ENCODE measurements at regions of chr2 and their contacts with region 1.

Region 1: GRCh38 chr2:63698825-63699548 is 110.2 kb downstream of the MDH1 start:
- DNase-seq: peak; percentile 17
- H3K4me3 ChIP-seq: no peak overlapping the region
- H3K27ac ChIP-seq: peak overlapping the region; percentile 65
- H3K4me1 ChIP-seq: peaks cover 16% of the 10 kb centered on the region
- H3K27me3 ChIP-seq: no peaks in the 10 kb centered on the region
- CTCF ChIP-seq: peak; percentile 72

Region 2: DNA sequence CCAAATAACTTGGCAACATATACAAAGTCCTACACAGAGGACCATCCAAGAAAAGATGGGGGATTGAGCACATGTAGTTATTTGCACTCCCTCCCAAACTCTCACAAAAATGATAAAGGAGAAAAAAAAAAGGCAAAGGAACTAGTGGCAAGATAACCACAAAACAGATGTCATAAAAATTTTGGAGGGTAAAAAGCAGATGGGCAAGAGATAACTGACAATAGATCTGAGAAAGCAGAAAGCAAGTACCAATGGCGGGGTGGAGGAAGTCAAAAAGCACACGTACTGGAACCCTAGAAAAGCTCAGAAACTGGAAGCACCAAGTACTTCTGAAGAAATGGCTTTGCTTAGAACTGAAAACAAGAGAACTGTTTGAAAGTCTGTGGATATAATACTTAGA is 192.7 kb before region 1 on chr2:
- intact Hi-C with region 1: no loop called
- DNase-seq: no peak
- H3K4me3 ChIP-seq: no peak overlapping the region
- H3K27ac ChIP-seq: no peak overlapping the region
- H3K4me1 ChIP-seq: no peaks in the 10 kb centered on the region
- H3K27me3 ChIP-seq: no peaks in the 10 kb centered on the region
- CTCF ChIP-seq: no peak

Region 3: DNA sequence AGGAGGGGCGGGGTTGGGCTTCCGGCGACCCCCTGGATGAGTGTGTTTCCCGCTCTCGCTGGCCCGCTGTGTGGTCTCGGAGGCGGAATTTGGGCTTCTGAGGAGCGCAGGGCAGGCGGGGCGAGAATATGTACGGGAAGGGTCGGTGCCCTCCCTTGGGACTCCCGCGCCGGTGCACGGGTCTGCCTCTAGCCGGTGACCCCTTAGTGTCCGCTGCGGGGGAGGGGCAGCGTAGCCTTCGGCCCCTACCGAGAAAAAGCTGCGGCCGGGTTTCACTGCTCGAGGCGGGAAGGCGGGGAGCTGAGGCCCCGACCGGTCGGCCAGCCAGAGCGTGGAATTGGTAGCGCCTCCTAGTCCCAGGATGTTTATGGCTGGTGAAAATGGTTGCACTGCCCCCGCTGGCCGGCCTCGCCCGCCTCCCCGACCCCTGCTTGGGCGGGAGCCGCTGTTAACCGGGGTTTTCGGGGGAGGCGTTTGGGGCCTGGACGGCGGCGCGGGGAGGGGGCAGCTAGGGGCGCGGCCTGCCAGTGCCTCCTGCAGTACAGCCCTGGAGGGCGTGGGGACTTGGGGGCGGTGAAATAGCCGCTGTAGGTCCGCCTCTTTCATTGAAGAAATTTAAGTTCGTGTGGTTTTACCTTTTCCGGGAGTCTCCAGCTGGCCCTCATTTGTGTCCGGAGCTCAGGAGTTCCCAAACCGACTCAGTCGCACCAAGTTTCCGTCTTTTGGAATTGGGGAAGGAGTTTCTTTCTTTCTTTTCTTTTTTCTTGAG is 142.5 kb after region 1 on chr2 and contains the start of gene UGP2:
- intact Hi-C with region 1: loop called (anchors 10 kb)
- DNase-seq: peak; percentile 93
- H3K4me3 ChIP-seq: peak within 1 kb of the TSS; percentile 85
- H3K27ac ChIP-seq: peak within 1 kb of the TSS; percentile 97
- H3K4me1 ChIP-seq: peaks cover 61% of the 10 kb centered on the region
- H3K27me3 ChIP-seq: no peaks in the 10 kb centered on the region
- CTCF ChIP-seq: no peak
- total RNA-seq, gene UGP2: 394 TPM

Region 4: DNA sequence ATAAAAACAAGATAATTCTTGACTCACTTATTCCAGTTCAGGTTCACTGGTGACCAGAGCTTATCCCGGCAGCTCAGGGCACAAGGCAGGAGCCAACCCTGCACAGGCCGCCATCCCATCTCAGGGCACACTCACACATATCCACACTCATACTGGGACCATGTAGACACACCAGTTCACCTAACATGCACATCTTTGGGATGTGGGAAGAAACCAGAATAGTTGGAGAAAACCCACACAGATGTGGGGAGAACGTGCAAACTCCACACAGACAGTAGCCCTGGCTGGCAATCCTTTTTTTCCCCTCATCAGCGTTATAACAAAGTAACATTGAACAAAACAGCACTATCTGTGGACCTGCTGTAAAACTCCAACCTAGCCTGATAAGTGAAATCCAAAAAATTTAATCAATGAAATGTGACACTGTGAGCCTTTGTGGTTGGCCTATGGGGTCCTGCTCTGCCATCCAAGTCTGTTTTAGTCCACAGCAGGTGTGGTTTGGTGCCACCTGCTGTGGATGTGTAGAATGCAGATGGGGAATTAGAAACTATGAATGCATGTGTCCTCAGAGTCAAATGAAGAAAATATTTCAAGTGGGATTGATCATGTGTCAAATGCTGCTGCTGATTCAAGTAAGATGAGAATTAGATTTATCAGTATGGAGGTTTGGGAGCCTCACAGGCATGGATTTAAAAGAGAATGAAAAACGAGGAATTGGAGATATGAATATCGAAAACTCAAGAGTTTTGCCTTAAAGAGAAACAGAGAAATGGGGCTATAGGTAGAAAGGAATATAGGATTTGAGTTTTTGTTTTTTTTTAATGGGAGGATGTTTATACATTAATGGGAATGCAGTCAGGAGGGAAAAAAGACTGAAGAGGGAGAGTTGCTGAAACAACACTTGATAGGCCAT is 189.8 kb after region 1 on chr2:
- intact Hi-C with region 1: loop called (anchors 10 kb)
- DNase-seq: no peak
- H3K4me3 ChIP-seq: no peak overlapping the region
- H3K27ac ChIP-seq: peak overlapping the region; percentile 21
- H3K4me1 ChIP-seq: peaks cover 35% of the 10 kb centered on the region
- H3K27me3 ChIP-seq: no peaks in the 10 kb centered on the region
- CTCF ChIP-seq: peak; percentile 79